Activated CD4-positive, alpha-beta T cell treated with anti-CD3 and anti-CD28 coated beads, Interleukin-2, amount 10 ng/mL, durations not matched to agents 24 days and 14 days (primary cell): ENCODE measurements at regions of chr11 and their contacts with region 1.

Region 1: GRCh38 chr11:69337211-69337721 is 43.3 kb downstream of the MYEOV start:
- DNase-seq: peak; percentile 79
- H3K4me3 Mint-ChIP-seq: peak overlapping the region; percentile 61
- H3K27ac Mint-ChIP-seq: peak overlapping the region; percentile 96
- H3K4me1 Mint-ChIP-seq: peaks cover 43% of the 10 kb centered on the region
- H3K27me3 Mint-ChIP-seq: peaks cover 4% of the 10 kb centered on the region

Region 2: DNA sequence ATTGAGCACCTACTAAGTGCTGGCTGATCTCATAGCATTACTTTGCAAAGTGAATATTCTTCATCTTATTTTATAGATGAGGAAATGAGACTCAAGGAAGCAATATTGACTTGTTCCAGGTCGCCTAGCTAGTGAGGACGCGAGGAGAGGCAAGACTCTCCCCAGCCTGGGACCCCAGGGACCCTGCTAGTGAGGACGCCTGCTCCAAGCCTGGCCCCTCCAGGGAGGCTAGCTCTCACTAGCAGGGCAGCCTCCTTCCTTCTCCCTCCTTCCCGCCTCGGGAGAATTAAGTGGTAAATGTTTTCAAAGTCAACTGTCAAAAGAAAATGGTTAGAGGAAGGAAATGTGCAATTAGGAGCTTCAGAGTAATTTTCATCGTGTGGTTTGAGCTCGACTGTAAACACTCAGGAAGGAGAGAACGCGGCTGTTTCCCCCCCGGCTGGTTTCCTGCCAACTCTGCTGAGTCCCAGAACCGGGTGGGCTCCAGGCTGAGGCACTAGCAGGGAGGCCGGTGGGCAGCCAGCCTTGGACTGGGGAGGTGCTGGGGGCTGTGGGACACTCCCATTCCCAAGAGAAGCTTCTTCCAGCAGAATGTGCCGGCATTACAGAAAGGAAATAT is 25.4 kb before region 1 on chr11:
- intact Hi-C with region 1: loop called (anchors 2 kb)
- DNase-seq: peak; percentile 75
- H3K4me3 Mint-ChIP-seq: peak overlapping the region; percentile 54
- H3K27ac Mint-ChIP-seq: peak overlapping the region; percentile 83
- H3K4me1 Mint-ChIP-seq: peaks cover 36% of the 10 kb centered on the region
- H3K27me3 Mint-ChIP-seq: no peaks in the 10 kb centered on the region

Region 3: DNA sequence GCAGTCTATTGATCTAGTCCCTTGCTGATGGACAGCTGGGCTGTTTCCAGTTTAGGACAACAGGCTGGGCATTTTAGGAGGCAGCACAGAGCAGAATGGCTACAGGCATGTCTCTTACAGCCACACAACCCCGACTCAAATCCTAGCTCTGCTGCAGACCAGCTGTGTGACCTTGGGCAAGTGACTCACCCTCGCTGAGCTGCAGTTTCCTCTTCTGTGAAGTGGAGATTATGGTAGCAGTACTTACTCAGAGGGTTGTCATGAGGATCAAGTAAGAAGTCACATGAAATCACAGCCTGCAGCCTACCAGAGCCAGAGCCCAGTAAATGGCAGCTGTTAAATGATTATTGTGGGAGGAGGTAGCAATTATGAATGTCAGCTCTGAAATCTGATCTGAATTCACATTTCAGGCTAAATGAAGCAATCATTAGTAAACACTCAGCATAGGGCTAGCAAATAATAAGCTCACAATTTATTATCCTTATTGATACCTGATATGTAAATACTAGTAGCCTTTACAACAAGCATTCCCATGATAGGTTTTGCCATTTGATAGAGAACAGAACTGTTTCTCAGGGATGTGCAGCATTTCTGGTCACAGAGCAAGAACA is 15.6 kb after region 1 on chr11:
- intact Hi-C with region 1: loop called (anchors 2 kb)
- DNase-seq: peak; percentile 59
- H3K4me3 Mint-ChIP-seq: no peak overlapping the region
- H3K27ac Mint-ChIP-seq: peak overlapping the region; percentile 11
- H3K4me1 Mint-ChIP-seq: peaks cover 14% of the 10 kb centered on the region
- H3K27me3 Mint-ChIP-seq: peaks cover 5% of the 10 kb centered on the region

Region 4: DNA sequence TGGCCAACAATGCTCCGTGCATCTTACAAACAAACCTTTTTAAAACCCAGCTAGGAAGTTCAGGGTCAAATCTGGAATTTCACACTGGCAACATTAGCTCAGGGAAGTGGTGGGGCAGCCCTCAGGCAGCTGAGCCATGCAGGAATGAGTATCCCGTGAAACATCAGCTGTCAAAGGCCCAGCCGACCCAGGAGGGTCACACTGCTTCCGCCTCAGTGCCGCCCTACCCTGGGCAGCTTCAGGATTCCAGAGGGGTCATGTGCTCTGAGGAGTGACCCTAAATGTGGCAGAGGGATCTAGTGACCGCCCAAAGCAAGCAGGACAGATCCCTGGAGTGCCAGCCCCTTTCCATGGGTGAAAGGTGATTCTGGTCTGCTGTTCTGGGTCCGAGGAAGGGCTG is 217.6 kb after region 1 on chr11:
- intact Hi-C with region 1: loop called (anchors 5 kb)
- DNase-seq: no peak
- H3K4me3 Mint-ChIP-seq: no peak overlapping the region
- H3K27ac Mint-ChIP-seq: no peak overlapping the region
- H3K4me1 Mint-ChIP-seq: peaks cover 16% of the 10 kb centered on the region
- H3K27me3 Mint-ChIP-seq: peaks cover 5% of the 10 kb centered on the region